ENCODE measurements at regions of chr4 and their contacts with region 1.

Region 1: DNA sequence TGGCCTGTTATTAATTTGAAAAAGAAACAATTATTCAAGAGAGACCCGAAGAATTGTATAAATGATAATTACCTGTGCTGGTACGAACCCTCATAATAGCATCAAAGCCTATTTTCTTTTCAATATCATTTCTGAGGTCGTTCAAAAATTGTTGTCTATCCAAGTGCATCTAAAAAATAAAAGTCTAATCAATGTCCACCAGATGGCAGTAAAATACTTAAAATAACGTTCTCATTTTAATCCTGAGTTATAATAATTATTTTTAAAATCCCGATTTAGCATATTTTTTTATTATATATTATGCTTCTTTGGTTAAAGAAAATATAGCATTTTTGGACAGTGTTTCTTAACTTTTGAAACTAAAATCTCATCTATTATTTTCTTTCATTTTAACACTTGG is 55.7 kb downstream of the METTL14 start:
- DNase-seq: no peak
- H3K4me3 ChIP-seq: no peak overlapping the region
- H3K27ac ChIP-seq: no peak overlapping the region
- H3K4me1 ChIP-seq: no peaks in the 10 kb centered on the region
- H3K27me3 ChIP-seq: no peaks in the 10 kb centered on the region
- CTCF ChIP-seq: peak; percentile 18 to 23

Region 2: GRCh38 chr4:118954246-118954645 is 213.4 kb after region 1 on chr4:
- CTCF ChIA-PET with region 1: no interaction called
- dilution Hi-C with region 1: no loop called
- in situ Hi-C with region 1: loop called in 1 of 2 experiments (anchors 10 kb)
- intact Hi-C with region 1: no loop called
- DNase-seq: no peak
- H3K4me3 ChIP-seq: no peak overlapping the region
- H3K27ac ChIP-seq: no peak overlapping the region
- H3K4me1 ChIP-seq: no peaks in the 10 kb centered on the region
- H3K27me3 ChIP-seq: no peaks in the 10 kb centered on the region
- CTCF ChIP-seq: peak; percentile 12 to 47

Region 3: GRCh38 chr4:118968005-118968404 is 227.1 kb after region 1 on chr4:
- CTCF ChIA-PET with region 1: no interaction called
- dilution Hi-C with region 1: no loop called
- in situ Hi-C with region 1: no loop called
- intact Hi-C with region 1: loop called (anchors 1 kb)
- DNase-seq: peak; percentile 48
- H3K4me3 ChIP-seq: no peak overlapping the region
- H3K27ac ChIP-seq: no peak overlapping the region
- H3K4me1 ChIP-seq: peaks cover 20% of the 10 kb centered on the region
- H3K27me3 ChIP-seq: no peaks in the 10 kb centered on the region
- CTCF ChIP-seq: no peak

Measured in mammary epithelial cell (primary cell).